ENCODE measurements at regions of chr6 and their contacts with region 1.

Region 1: DNA sequence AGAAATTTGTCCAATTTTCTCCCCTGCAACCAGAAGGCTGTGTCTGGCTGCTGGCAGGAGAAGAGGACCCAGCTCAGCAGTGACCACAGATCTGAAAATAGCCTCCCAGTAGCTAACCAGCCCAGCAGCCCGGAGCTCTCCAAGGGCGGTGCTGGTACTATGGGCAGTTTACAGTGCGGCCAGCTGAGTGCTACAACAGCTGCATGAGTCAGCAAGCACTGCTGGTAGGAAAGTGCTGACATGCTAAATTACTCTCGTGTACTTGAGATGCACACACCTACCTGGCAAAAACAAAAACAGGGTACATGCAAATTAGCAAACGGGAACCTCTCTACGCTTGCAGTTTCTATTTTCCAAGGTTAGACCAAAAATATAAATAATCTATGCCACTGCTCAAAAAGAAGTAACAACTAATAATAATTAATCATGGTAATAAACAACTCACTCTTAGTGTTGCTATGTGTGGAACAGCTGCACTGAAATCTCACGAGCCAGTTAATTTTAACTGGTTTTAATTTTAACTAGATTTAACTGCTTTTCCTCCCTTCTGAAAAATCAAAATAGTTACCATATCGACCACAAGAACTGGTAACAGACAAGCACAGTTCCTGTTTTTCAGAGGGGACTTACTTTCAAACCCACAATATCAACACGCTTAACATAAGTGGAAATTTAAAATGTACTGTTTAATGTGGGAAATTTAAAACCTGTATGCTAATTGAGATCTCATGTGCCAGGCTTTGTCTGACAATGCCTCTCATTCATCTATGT is 10.8 kb downstream of the BACH2 start:
- DNase-seq: peak; percentile 62
- ATAC-seq: peak; percentile 75
- H3K4me3 Mint-ChIP-seq: peak overlapping the region; percentile 24; the same call in 1 of the 2 replicates
- H3K27ac Mint-ChIP-seq: peak overlapping the region; percentile 3; the same call in 1 of the 2 replicates
- H3K4me1 Mint-ChIP-seq: peaks cover 45% of the 10 kb centered on the region
- H3K27me3 Mint-ChIP-seq: no peaks in the 10 kb centered on the region
- CTCF ChIP-seq: no peak

Region 2: DNA sequence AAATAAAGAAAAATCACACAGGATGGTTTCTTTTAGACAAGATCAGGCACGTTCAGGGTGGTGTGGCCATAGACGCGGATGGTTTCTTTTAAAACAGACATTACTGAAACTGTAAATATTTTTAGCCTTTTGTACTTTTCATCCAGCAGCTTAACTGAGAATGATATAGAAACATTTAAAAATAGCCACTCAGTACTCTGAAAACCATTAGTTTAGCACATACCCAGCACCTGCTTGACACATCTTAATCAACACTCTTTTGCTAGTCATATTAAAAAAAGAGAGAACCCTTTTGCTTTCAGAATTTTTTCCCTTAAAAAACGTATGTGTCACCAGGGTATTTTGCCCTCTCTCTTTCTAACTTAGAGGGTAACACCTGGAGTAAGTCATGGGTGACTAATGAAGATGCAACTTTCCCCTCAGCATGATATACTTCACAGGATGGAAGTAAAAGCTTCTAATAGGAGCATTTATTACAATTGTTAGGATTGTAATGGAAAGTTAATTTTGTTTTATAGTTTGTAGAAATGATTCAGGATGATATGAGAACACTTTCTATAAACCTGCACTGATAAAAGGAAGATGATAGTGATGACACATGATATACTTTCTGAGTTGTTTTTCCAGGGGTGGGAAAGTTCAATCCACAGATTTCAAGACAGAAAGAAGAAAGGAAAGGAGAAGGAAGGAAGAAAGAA is 34.4 kb before region 1 on chr6:
- CTCF ChIA-PET with region 1: no interaction called
- POLR2A ChIA-PET with region 1: no interaction called
- DNase-seq: no peak
- ATAC-seq: no peak
- H3K4me3 Mint-ChIP-seq: no peak overlapping the region
- H3K27ac Mint-ChIP-seq: no peak overlapping the region
- H3K4me1 Mint-ChIP-seq: no peaks in the 10 kb centered on the region
- H3K27me3 Mint-ChIP-seq: no peaks in the 10 kb centered on the region
- CTCF ChIP-seq: no peak

Region 3: DNA sequence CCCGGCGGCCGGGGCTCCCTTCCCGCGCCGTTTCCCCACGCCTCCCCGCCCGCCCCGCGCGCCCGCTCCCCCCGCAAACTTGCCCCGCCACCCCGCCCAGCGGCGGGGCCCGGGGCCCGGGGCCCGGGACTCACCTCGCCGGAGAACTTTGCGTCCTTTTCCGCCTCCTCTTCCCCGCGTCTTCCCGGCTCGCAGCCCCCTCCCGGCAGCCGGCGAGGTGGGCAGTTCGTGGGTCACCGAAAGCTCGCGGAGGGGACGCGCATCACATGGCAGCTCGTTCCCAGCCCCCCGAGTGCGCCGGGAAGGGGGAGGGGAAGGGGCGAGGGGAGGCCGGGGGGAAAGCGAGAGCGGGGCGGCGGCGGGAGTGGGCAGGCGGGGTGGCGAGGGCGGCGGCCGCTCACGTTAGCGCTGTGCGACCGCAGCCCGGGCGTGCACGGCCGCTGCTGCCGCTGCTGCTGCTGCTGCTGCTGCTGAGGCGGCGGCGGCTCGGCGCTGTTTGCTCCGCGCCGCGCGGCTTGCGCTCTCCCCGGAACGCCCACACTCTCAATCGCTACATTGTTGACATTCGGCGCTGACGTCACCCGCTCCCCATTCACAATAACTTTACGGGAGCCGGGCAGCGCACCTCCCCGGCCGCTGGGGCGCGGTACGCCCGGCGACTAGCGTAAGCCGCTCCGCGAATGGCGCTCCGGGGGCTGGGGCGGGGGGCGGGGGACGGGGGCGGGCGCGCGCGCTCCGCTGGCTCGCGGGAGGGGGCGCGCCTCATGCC is 10.7 kb after region 1 on chr6 and contains the start of gene BACH2:
- CTCF ChIA-PET with region 1: interaction called, 16 read pairs
- POLR2A ChIA-PET with region 1: no interaction called
- DNase-seq: peak; percentile 95
- ATAC-seq: peak; percentile 75
- H3K4me3 Mint-ChIP-seq: peak within 1 kb of the TSS; percentile 74
- H3K27ac Mint-ChIP-seq: no peak within 1 kb of the TSS
- H3K4me1 Mint-ChIP-seq: peaks cover 34% of the 10 kb centered on the region
- H3K27me3 Mint-ChIP-seq: peaks cover 51% of the 10 kb centered on the region
- CTCF ChIP-seq: no peak
- total RNA-seq, gene BACH2: 3.9 to 5.9 TPM (median 4.5 TPM) in 3 replicates

Region 4: DNA sequence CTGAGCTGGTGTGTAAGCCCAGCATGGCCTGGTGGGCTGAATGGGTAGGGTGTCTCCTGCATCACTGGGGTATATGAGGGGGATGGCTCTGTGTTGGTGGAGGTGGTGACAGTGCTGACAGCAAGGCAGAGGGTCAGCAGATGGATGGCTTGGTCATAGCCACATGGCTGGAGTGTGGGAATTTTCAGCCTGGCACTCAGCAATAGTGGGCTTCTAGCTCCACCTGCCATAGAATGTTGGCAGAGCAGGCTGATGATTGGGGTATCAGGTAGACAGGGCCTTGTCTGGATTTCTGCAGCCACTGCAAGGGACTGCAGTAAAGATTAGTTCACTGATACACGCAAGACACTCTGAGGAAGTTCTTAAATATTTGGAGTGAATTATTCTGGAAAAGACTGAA is 148.3 kb after region 1 on chr6:
- CTCF ChIA-PET with region 1: interaction called, 16 read pairs
- POLR2A ChIA-PET with region 1: no interaction called
- DNase-seq: peak; percentile 28
- ATAC-seq: peak; percentile 77
- H3K4me3 Mint-ChIP-seq: no peak overlapping the region
- H3K27ac Mint-ChIP-seq: no peak overlapping the region
- H3K4me1 Mint-ChIP-seq: peaks cover 50% of the 10 kb centered on the region
- H3K27me3 Mint-ChIP-seq: peaks cover 6% of the 10 kb centered on the region
- CTCF ChIP-seq: peak; percentile 22; the same call in 1 of the 2 replicates

Measured in WTC11 (cell line).